ENCODE measurements at regions of chr3 and their contacts with region 1.

Region 1: GRCh38 chr3:152480282-152480953 is 211.7 kb downstream of the MBNL1 start:
- DNase-seq: peak; percentile 42
- ATAC-seq: peak; percentile 17
- H3K4me3 ChIP-seq: peak overlapping the region in 1 of 5 experiments; percentile 42
- H3K4me3 Mint-ChIP-seq: peak overlapping the region; percentile 86
- H3K27ac ChIP-seq: peak overlapping the region; percentile 19 to 61
- H3K27ac Mint-ChIP-seq: peak overlapping the region; percentile 93
- H3K4me1 ChIP-seq: peaks cover 26 to 29% of the 10 kb centered on the region in 2 donors
- H3K4me1 Mint-ChIP-seq: peaks cover 53% of the 10 kb centered on the region
- H3K27me3 ChIP-seq: no peaks in the 10 kb centered on the region
- H3K27me3 Mint-ChIP-seq: no peaks in the 10 kb centered on the region
- CTCF ChIP-seq: no peak

Region 2: DNA sequence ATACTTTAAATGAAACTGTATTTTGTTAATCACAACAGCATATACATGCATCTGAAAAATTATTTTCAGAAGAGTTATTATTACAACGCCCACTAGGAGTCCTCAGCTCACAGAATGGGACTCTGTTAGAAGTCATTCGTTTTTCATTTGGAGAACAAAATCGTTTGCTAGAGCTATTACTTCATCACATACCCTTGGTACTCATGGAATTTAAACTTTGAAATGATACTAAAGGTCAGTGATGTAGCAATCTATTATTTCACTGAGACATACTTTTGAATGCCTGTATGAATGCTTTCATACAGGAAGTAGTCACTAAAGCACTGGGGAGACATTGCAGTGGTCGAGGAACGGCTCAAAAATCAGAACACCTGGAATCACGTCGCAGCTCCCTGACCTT is 13.6 kb before region 1 on chr3:
- CTCF ChIA-PET with region 1: interaction called, 13 read pairs
- POLR2A ChIA-PET with region 1: no interaction called
- intact Hi-C with region 1: no loop called
- DNase-seq: peak; percentile 55
- ATAC-seq: peak; percentile 71
- H3K4me3 ChIP-seq: no peak overlapping the region
- H3K4me3 Mint-ChIP-seq: no peak overlapping the region
- H3K27ac ChIP-seq: peak overlapping the region in 1 of 2 donors; percentile 32
- H3K27ac Mint-ChIP-seq: peak overlapping the region; percentile 59
- H3K4me1 ChIP-seq: peaks cover 3 to 10% of the 10 kb centered on the region in 2 donors
- H3K4me1 Mint-ChIP-seq: peaks cover 20% of the 10 kb centered on the region
- H3K27me3 ChIP-seq: no peaks in the 10 kb centered on the region
- H3K27me3 Mint-ChIP-seq: no peaks in the 10 kb centered on the region
- CTCF ChIP-seq: peak; percentile 78

Region 3: DNA sequence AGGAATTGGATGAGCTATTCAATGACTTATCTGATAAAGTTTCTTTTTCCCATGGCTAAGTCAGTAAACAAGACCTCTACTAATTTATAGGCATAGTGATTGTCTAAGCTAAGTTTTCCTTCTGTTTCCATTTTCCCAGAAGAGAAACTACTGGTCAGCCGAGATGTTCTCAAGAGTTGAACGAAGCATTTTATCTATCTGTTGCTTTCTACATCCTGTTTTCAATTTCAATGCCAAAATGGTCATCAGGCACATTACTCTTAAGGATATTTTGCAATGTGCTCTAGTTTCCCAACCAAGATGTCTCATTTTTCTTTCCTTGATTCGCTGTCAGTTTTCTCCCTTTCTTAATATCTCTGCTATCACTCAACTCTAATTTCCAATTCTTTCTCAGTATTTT is 17.0 kb after region 1 on chr3:
- CTCF ChIA-PET with region 1: interaction called, 6 read pairs
- POLR2A ChIA-PET with region 1: no interaction called
- intact Hi-C with region 1: loop called (anchors 2 kb)
- DNase-seq: no peak
- ATAC-seq: no peak
- H3K4me3 ChIP-seq: peak overlapping the region in 1 of 5 experiments; percentile 27
- H3K4me3 Mint-ChIP-seq: peak overlapping the region; percentile 62
- H3K27ac ChIP-seq: peak overlapping the region; percentile 45 to 74
- H3K27ac Mint-ChIP-seq: peak overlapping the region; percentile 81
- H3K4me1 ChIP-seq: peaks cover 25 to 35% of the 10 kb centered on the region in 2 donors
- H3K4me1 Mint-ChIP-seq: peaks cover 52% of the 10 kb centered on the region
- H3K27me3 ChIP-seq: no peaks in the 10 kb centered on the region
- H3K27me3 Mint-ChIP-seq: no peaks in the 10 kb centered on the region
- CTCF ChIP-seq: no peak

Region 4: DNA sequence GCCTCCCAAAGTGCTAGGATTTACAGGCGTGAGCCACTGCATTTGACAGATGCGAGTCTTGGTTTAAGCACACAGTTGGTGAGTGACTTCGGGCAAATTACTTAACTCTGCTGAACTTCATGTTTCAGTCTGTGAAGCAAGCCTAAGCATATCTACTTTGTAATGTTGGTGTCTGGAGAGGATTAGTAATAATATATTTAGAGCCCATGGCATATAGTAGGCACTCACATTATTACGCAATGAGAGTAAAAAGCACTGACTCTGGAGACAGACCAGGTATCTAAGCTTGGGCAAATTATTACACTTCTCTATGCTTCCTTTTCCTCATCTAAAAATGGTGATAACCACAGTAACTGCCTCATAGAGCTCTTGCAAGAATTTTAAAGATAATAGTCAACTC is 145.8 kb after region 1 on chr3:
- CTCF ChIA-PET with region 1: no interaction called
- POLR2A ChIA-PET with region 1: interaction called, 11 read pairs
- intact Hi-C with region 1: no loop called
- DNase-seq: no peak
- ATAC-seq: no peak
- H3K4me3 ChIP-seq: no peak overlapping the region
- H3K4me3 Mint-ChIP-seq: no peak overlapping the region
- H3K27ac ChIP-seq: no peak overlapping the region
- H3K27ac Mint-ChIP-seq: no peak overlapping the region
- H3K4me1 ChIP-seq: no peaks in the 10 kb centered on the region
- H3K4me1 Mint-ChIP-seq: no peaks in the 10 kb centered on the region
- H3K27me3 ChIP-seq: no peaks in the 10 kb centered on the region
- H3K27me3 Mint-ChIP-seq: peaks cover 4% of the 10 kb centered on the region
- CTCF ChIP-seq: no peak